GM10248 (cell line): ENCODE measurements at regions of chr4 and their contacts with region 1.

Region 1: DNA sequence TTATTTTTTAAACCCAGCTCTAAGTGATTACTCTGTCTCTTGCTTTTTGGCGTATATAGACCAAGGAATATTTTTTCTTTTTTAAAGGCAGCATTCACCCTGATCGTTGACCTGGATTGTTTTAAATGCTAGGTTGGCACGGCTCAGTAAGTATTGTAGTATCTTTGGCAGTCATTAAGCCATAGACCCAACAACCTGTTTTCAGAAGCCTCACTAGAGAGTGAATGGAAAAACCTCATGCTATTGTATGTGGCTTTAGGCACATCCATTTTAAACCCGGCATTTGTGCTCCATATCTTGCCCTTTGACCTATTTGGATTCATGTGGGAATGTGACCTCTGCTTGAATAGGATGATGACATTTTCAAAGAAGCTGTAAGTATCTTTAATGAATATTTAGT is 183.9 kb downstream of the SNCA start:
- DNase-seq: no peak
- CTCF ChIP-seq: no peak

Region 2: DNA sequence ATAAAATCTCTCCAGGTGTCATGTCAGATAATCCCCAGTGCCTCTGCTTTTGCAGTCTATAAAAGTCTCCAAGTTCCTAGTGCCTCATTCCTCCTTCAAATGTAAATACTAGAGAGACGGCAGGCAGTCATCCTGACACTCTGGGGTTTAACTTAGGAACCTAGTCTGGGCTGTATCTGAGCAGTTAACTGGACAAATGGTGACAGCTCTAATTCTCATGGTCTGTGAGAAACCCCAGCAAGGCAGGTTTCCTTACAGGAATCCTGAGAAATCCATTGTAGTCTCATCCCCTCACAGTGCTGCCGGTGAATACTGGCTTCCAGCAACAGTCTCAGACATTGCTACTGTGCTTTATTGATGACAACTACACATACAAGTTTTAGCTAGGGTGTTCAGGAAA is 62.9 kb before region 1 on chr4:
- CTCF ChIA-PET with region 1: no interaction called
- POLR2A ChIA-PET with region 1: no interaction called
- DNase-seq: no peak
- CTCF ChIP-seq: no peak

Region 3: DNA sequence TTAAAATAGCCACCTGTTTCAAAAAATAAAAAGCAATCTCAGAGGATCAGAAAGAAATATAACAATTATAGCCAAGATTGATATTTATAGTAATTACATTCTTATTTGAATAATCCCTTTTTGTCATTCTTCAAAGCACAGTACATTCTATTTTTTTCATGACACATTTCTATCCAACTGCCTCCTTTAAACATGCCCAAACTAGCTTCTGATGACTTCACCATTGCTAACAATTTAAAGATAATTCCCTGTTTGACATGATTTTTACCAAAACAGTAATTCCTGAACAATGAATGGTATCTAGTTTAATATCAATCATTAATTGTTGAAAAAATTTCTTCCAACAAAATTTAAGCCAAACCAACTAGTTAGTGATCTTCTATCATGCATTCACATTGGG is 11.5 kb after region 1 on chr4:
- CTCF ChIA-PET with region 1: interaction called, 11 read pairs
- POLR2A ChIA-PET with region 1: no interaction called
- DNase-seq: no peak
- CTCF ChIP-seq: no peak